GM12878 (cell line): ENCODE measurements at regions of chr5 and their contacts with region 1.

Region 1: DNA sequence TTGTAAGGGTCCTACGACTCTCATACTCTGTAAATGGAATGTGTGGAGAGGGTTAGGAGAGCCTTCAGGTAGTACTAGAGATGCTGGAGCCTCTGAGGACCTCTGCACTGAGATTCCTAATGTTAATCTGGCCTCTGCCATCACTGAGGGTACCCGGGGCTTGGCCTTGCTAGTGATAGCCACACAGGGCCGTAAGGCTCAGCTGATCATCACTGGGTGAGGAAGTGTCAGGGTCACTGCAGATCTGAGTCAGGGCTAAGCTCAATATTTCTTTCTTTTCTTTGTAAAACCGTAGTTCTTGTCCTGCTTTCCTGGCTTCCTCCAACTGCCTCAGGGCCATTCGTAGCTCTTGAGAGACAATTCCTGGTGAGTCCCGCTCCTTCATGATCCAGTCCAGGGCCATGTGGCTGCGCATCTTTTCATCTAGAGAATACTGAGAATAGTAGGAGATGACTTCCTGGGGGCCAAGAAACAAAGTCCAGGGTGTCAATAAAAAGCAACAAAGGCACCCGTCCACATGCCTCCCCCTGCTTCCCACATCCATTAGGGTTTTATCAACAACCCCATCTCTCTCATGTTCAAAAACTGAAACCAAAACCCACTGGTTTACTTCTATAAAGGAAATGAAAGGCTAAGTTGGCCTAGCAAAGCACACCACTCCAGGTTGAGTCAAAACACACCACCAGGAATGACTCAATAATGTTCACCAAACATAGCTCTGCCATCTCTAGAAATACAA is 47.7 kb downstream of the LIX1 start:
- DNase-seq: peak; percentile 86
- ATAC-seq: peak; percentile 95
- H3K4me3 ChIP-seq: no peak overlapping the region
- H3K27ac ChIP-seq: peak overlapping the region; percentile 86
- H3K4me1 ChIP-seq: peaks cover 26% of the 10 kb centered on the region
- H3K27me3 ChIP-seq: no peaks in the 10 kb centered on the region
- CTCF ChIP-seq: no peak
- EP300 ChIP-seq: peak in 1 of 2 experiments; percentile 96; a peak in 2 of 4 replicates
- POLR2A ChIP-seq: no peak
- RAD21 ChIP-seq: no peak; the same call in 1 of the 2 replicates

Region 2: GRCh38 chr5:97078958-97079743 is 15.6 kb before region 1 on chr5:
- CTCF ChIA-PET with region 1: interaction called, 5 read pairs
- POLR2A ChIA-PET with region 1: no interaction called
- RAD21 ChIA-PET with region 1: interaction called, 5 read pairs
- SMC1A ChIA-PET with region 1: interaction called, 17 read pairs
- in situ Hi-C with region 1: no loop called
- intact Hi-C with region 1: no loop called
- DNase-seq: no peak
- ATAC-seq: peak; percentile 74
- H3K4me3 ChIP-seq: no peak overlapping the region
- H3K27ac ChIP-seq: no peak overlapping the region
- H3K4me1 ChIP-seq: peaks cover 4% of the 10 kb centered on the region; the same call in 1 of the 2 replicates
- H3K27me3 ChIP-seq: no peaks in the 10 kb centered on the region
- CTCF ChIP-seq: no peak
- EP300 ChIP-seq: no peak
- POLR2A ChIP-seq: no peak
- RAD21 ChIP-seq: no peak

Region 3: GRCh38 chr5:97452646-97453045 is 357.9 kb after region 1 on chr5:
- CTCF ChIA-PET with region 1: no interaction called
- POLR2A ChIA-PET with region 1: no interaction called
- RAD21 ChIA-PET with region 1: no interaction called
- SMC1A ChIA-PET with region 1: no interaction called
- in situ Hi-C with region 1: no loop called
- intact Hi-C with region 1: no loop called
- DNase-seq: no peak
- ATAC-seq: peak; percentile 76
- H3K4me3 ChIP-seq: no peak overlapping the region
- H3K27ac ChIP-seq: no peak overlapping the region
- H3K4me1 ChIP-seq: no peaks in the 10 kb centered on the region
- H3K27me3 ChIP-seq: no peaks in the 10 kb centered on the region
- CTCF ChIP-seq: no peak
- EP300 ChIP-seq: no peak
- POLR2A ChIP-seq: no peak
- RAD21 ChIP-seq: no peak